ENCODE measurements at regions of chr1 and their contacts with region 1.

Region 1: GRCh38 chr1:155323798-155324610 is 3.3 kb downstream of the RUSC1 start:
- DNase-seq: peak; percentile 98
- H3K4me3 ChIP-seq: peak overlapping the region; percentile 68
- H3K27ac ChIP-seq: peak overlapping the region; percentile 78
- H3K4me1 ChIP-seq: peaks cover 27% of the 10 kb centered on the region
- H3K27me3 ChIP-seq: no peaks in the 10 kb centered on the region
- CTCF ChIP-seq: no peak

Region 2: GRCh38 chr1:155208541-155209311 is 115.3 kb before region 1 on chr1 and contains the start of gene MTX1:
- CTCF ChIA-PET with region 1: interaction called, 5 read pairs
- POLR2A ChIA-PET with region 1: no interaction called
- intact Hi-C with region 1: loop called (anchors 5 kb)
- DNase-seq: peak; percentile 87
- H3K4me3 ChIP-seq: peak within 1 kb of the TSS; percentile 95
- H3K27ac ChIP-seq: peak within 1 kb of the TSS; percentile 93
- H3K4me1 ChIP-seq: peaks cover 16% of the 10 kb centered on the region
- H3K27me3 ChIP-seq: no peaks in the 10 kb centered on the region
- CTCF ChIP-seq: no peak
- total RNA-seq, gene MTX1: 65.2 and 75.9 TPM in 2 replicates

Region 3: DNA sequence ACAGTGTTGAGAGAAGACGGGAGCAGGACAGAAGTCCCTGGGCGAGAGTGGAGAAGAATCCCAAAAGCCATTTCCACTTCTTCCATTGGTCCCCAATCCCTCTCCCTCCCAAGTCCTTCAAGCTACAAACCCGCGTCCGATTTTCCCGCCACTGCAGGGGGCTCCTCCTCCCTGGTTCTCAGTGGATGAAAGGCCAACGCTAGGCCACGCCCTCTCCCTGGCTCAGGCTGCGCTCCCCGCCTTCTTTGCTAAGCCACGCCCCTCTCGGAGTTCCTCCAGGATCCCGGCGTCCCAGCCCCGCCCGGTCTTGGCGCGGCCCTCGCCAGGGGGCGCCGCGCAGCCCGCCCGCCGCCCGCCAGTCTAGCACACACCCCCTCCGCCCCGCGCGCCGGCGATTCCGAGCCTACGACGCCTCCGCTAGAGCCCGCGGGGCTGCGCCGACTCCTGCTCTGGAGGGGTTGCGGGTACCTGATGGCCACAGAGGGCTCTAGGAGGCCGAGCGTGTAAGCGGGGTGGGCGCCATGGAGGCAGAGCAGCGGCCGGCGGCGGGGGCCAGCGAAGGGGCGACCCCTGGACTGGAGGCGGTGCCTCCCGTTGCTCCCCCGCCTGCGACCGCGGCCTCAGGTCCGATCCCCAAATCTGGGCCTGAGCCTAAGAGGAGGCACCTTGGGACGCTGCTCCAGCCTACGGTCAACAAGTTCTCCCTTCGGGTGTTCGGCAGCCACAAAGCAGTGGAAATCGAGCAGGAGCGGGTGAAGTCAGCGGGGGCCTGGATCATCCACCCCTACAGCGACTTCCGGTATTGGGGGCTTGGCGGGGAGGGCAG is 46.7 kb before region 1 on chr1 and contains the start of gene HCN3:
- CTCF ChIA-PET with region 1: interaction called, 6 read pairs
- POLR2A ChIA-PET with region 1: no interaction called
- intact Hi-C with region 1: loop called (anchors 2 kb)
- DNase-seq: peak; percentile 98
- H3K4me3 ChIP-seq: peak within 1 kb of the TSS; percentile 73
- H3K27ac ChIP-seq: peak within 1 kb of the TSS; percentile 48
- H3K4me1 ChIP-seq: peaks cover 22% of the 10 kb centered on the region
- H3K27me3 ChIP-seq: no peaks in the 10 kb centered on the region
- CTCF ChIP-seq: peak; percentile 60
- total RNA-seq, gene HCN3: 11.3 and 12.2 TPM in 2 replicates

Region 4: GRCh38 chr1:155352631-155353030 is 28.6 kb after region 1 on chr1:
- CTCF ChIA-PET with region 1: no interaction called
- POLR2A ChIA-PET with region 1: no interaction called
- intact Hi-C with region 1: no loop called
- DNase-seq: no peak
- H3K4me3 ChIP-seq: no peak overlapping the region
- H3K27ac ChIP-seq: no peak overlapping the region
- H3K4me1 ChIP-seq: no peaks in the 10 kb centered on the region
- H3K27me3 ChIP-seq: no peaks in the 10 kb centered on the region
- CTCF ChIP-seq: no peak

Region 5: DNA sequence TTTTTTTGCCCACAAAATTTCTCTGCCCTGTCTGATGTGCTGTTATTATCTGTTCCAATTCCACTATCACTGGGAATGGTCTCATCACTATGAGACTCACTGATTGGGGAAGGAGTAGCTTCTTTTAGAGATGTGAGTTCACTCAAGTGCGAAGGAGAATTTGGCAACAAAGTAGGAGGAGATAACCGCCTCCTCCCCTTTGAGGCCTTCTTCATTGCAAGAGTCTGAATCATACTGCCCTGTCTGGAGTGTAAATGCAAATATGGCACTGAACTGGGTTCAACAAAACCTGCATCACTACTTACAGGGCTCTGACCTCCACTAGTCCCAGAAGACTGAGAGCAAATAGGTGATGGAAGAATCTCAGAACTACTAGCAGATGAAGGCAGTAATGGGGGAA is 155.2 kb after region 1 on chr1:
- CTCF ChIA-PET with region 1: no interaction called
- POLR2A ChIA-PET with region 1: no interaction called
- intact Hi-C with region 1: no loop called
- DNase-seq: peak; percentile 41
- H3K4me3 ChIP-seq: no peak overlapping the region
- H3K27ac ChIP-seq: no peak overlapping the region
- H3K4me1 ChIP-seq: peaks cover 3% of the 10 kb centered on the region
- H3K27me3 ChIP-seq: no peaks in the 10 kb centered on the region
- CTCF ChIP-seq: no peak

Region 6: DNA sequence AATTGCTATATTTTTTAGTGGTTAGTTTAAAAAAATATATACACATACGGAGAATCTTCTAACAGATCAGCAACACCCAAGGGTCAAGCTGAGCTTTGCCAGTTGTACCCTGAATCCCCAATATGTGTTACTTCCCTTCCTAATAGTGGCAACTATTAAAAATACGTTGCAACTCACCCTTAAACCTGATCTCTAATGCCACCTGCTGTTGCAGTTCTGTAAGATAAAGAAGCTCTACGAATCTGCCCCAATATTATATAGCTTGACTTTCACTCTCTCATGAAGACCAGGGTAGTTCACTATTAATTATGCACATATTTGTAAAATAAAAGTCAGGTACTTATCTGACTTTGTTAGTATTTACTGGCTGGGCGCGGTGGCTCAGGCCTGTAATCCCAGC is 180.2 kb after region 1 on chr1:
- CTCF ChIA-PET with region 1: interaction called, 6 read pairs
- POLR2A ChIA-PET with region 1: no interaction called
- intact Hi-C with region 1: loop called (anchors 5 kb)
- DNase-seq: peak; percentile 57
- H3K4me3 ChIP-seq: no peak overlapping the region
- H3K27ac ChIP-seq: no peak overlapping the region
- H3K4me1 ChIP-seq: peaks cover 22% of the 10 kb centered on the region
- H3K27me3 ChIP-seq: no peaks in the 10 kb centered on the region
- CTCF ChIP-seq: peak; percentile 53; the same call in 1 of the 2 replicates

Region 7: DNA sequence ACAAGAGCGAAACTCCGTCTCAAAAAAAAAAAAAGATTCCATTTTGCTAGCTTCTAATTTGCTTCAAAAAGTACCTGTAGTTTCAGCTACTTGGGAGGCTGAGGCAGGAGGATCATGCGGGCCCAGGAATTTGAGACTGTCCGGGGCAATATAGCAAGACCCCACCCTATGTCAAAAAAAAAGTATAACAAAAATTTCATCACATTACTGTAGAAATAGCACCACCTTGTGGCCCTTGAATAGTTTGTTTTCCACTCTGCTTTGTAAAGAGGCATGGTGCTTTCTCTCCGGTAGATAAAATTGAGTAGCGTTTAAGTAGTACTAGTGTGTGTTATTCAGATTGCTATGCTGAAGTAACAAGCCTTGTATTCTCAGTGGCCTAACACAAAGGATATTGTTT is 267.8 kb after region 1 on chr1:
- CTCF ChIA-PET with region 1: no interaction called
- POLR2A ChIA-PET with region 1: no interaction called
- intact Hi-C with region 1: loop called (anchors 10 kb)
- DNase-seq: peak; percentile 86
- H3K4me3 ChIP-seq: no peak overlapping the region
- H3K27ac ChIP-seq: no peak overlapping the region
- H3K4me1 ChIP-seq: peaks cover 7% of the 10 kb centered on the region
- H3K27me3 ChIP-seq: no peaks in the 10 kb centered on the region
- CTCF ChIP-seq: peak; percentile 62

Measured in A673 (cell line).